SK-N-SH (cell line): ENCODE measurements at regions of chr2 and their contacts with region 1.

Region 1: GRCh38 chr2:172465417-172466334 is 38.3 kb downstream of the ITGA6 start:
- DNase-seq: peak; percentile 67
- H3K4me3 ChIP-seq: peak overlapping the region; percentile 36 to 41; a peak in 3 of 4 replicates
- H3K27ac ChIP-seq: peak overlapping the region in 1 of 2 experiments; percentile 42; a peak in 1 of 4 replicates
- H3K4me1 ChIP-seq: peaks cover 0 to 6% of the 10 kb centered on the region in 2 experiments; a peak in 3 of 4 replicates
- H3K27me3 ChIP-seq: no peaks in the 10 kb centered on the region
- CTCF ChIP-seq: peak; percentile 96
- EP300 ChIP-seq: no peak
- RAD21 ChIP-seq: peak; percentile 97

Region 2: GRCh38 chr2:171703574-171704347 is 761.9 kb before region 1 on chr2:
- CTCF ChIA-PET with region 1: interaction called, 10 read pairs
- POLR2A ChIA-PET with region 1: no interaction called
- DNase-seq: peak; percentile 40
- H3K4me3 ChIP-seq: no peak overlapping the region; a peak in 1 of 4 replicates
- H3K27ac ChIP-seq: peak overlapping the region in 1 of 2 experiments; percentile 23; a peak in 1 of 4 replicates
- H3K4me1 ChIP-seq: peaks cover 0 to 43% of the 10 kb centered on the region in 2 experiments; a peak in 3 of 4 replicates
- H3K27me3 ChIP-seq: no peaks in the 10 kb centered on the region
- CTCF ChIP-seq: peak; percentile 65
- EP300 ChIP-seq: no peak
- RAD21 ChIP-seq: peak; percentile 63

Region 3: DNA sequence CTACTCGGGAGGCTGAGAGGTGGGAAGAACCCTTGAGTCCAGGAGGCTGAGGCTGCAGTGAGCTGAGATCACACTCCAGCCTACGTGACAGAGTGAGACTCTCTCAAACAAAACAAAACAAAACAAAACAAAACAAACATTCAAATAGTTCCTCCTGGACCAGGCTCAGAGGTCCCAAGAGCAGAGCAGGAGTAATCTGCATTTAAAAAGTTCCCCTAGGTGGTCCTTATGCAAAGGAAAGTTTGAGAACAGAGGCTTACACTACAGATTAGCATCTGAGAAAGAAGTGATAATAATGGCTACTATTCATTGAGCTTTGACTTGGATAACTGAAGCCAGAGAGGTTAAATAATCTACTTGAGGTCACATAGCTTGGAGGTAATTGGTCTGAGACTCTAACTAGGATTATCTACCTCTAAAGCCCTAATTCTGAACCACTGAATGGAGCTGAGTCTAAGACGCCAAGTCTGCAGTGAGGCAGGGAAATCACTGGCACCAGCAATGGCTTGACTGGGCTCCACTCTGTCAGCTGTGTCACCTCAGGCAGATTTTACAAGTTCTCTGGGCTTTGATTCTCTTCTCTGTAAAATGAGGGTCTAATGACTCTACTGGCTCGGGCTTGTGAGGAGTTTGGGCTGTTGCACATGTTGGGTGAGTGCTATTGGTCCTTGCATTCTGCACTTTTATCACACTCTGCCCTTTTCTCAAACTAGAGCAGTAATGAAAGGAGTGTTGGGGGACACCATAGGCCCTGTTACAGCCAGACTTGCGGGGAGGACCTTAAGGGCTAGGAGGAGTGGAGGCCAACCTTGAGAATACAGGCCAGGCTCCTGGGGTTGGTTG is 333.7 kb before region 1 on chr2:
- CTCF ChIA-PET with region 1: interaction called, 14 read pairs
- POLR2A ChIA-PET with region 1: no interaction called
- DNase-seq: no peak
- H3K4me3 ChIP-seq: no peak overlapping the region
- H3K27ac ChIP-seq: no peak overlapping the region
- H3K4me1 ChIP-seq: no peaks in the 10 kb centered on the region
- H3K27me3 ChIP-seq: no peaks in the 10 kb centered on the region
- CTCF ChIP-seq: no peak
- EP300 ChIP-seq: no peak
- RAD21 ChIP-seq: no peak

Region 4: DNA sequence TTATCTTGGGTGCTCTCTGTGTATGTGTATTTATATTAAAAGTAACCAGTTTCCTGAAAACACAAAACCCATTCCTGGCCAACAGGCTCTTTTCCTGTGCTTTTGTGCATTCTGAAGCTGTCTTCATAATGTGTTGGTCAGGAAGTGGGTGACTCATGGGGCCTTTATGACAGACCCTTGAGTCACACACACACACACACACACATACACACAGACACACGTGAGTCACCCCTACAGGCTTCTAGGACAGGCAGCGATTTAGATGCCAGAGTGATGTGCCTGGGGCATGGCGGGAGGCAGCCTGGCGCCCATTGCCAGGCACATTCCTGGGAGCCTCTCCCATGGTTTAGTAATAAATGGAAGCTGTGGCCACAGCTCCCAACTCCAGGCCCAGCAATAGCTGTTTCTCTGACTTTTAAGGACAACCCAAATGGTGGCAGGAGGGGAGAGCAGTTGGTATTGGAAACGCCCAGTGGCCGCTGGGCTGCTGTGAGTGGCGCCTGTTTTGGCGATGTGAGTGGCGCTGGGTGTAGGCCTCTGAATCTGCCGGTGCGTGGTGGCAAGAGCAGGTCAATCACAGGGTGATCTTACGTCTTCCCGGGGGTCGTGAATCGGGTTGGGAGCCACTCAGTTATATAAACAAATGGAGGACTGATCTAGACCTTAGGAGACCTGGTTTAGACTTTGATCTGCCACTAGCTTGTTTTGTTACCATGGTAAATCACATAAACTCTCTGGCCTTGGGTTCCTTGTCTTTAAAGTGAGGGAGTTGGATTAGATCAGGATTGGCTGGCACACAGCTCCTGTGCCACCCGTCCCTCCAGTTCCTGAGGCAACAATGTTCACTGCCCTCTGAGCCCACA is 212.3 kb before region 1 on chr2:
- CTCF ChIA-PET with region 1: interaction called, 12 read pairs
- POLR2A ChIA-PET with region 1: no interaction called
- DNase-seq: peak; percentile 34
- H3K4me3 ChIP-seq: no peak overlapping the region
- H3K27ac ChIP-seq: peak overlapping the region; percentile 43 to 96
- H3K4me1 ChIP-seq: peaks cover 6 to 62% of the 10 kb centered on the region in 2 experiments; a peak in 3 of 4 replicates
- H3K27me3 ChIP-seq: no peaks in the 10 kb centered on the region
- CTCF ChIP-seq: no peak
- EP300 ChIP-seq: peak; percentile 30 to 99; a peak in 2 of 4 replicates
- RAD21 ChIP-seq: no peak

Region 5: DNA sequence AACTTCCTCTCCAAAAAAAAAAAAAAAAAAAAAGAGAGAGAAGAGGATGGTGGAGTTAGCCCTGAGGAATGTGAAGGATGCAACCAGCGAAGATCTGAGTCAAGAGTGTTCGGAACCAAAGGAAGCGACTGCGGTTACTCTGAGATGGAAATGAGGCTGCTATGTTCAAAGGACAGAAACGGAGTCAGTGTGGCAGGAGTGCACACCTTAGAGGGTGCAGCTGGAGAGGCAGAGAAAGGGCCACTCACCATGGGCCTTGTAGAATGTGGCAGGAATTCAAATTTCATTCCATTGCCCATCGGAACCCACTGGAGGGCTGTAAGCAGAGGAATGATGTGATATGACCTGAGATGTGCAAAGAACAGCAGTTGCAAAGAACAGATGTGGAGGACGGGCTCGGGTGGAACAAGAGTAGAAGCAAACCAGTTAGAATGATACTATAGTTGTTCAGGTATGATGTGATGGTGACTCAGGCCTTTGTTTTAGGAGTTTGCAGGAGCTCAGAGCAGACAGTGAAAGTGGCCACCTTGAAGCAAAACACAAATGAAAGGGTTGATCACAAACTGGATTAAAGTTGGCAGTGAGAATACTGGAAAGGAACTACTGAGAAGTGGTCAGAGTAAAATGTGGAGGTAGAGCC is 15.6 kb before region 1 on chr2:
- CTCF ChIA-PET with region 1: interaction called, 34 read pairs
- POLR2A ChIA-PET with region 1: no interaction called
- DNase-seq: no peak
- H3K4me3 ChIP-seq: no peak overlapping the region; a peak in 1 of 4 replicates
- H3K27ac ChIP-seq: no peak overlapping the region
- H3K4me1 ChIP-seq: peaks cover 3 to 19% of the 10 kb centered on the region in 2 experiments; a peak in 3 of 4 replicates
- H3K27me3 ChIP-seq: no peaks in the 10 kb centered on the region
- CTCF ChIP-seq: no peak
- EP300 ChIP-seq: no peak
- RAD21 ChIP-seq: no peak

Region 6: DNA sequence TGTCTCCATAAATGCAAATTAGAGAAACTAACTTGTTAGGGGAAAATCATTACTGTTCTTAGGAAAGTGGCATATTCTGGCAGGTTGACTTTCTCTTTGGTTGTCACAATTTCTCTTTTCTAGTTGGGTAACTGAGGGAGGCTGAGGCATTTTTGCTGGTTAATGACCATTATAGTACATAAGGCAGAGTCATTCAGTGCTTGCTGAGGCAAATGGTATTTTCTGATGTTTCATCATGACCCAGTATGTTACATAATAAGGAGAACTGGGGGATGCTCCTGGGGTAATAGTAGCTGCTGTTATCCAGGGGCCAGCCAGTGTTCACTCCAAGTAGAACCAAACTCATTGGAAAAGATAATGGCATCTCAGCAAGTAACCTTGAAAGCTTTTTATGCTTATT is 24.0 kb after region 1 on chr2:
- CTCF ChIA-PET with region 1: interaction called, 64 read pairs
- POLR2A ChIA-PET with region 1: no interaction called
- DNase-seq: no peak
- H3K4me3 ChIP-seq: no peak overlapping the region
- H3K27ac ChIP-seq: no peak overlapping the region
- H3K4me1 ChIP-seq: no peaks in the 10 kb centered on the region
- H3K27me3 ChIP-seq: no peaks in the 10 kb centered on the region
- CTCF ChIP-seq: no peak
- EP300 ChIP-seq: no peak
- RAD21 ChIP-seq: no peak

Region 7: GRCh38 chr2:173354601-173355131 is 889.0 kb after region 1 on chr2 and contains the start of gene CDCA7:
- CTCF ChIA-PET with region 1: no interaction called
- POLR2A ChIA-PET with region 1: no interaction called
- DNase-seq: peak; percentile 96
- H3K4me3 ChIP-seq: peak within 1 kb of the TSS; percentile 89 to 90
- H3K27ac ChIP-seq: peak within 1 kb of the TSS; percentile 38 to 94; a peak in 3 of 4 replicates
- H3K4me1 ChIP-seq: peaks cover 0 to 5% of the 10 kb centered on the region in 2 experiments; a peak in 1 of 4 replicates
- H3K27me3 ChIP-seq: no peaks in the 10 kb centered on the region; the same call in 1 of the 2 replicates
- CTCF ChIP-seq: no peak
- EP300 ChIP-seq: no peak
- RAD21 ChIP-seq: no peak
- polyA plus RNA-seq, gene CDCA7: 19.1 and 23.3 TPM in 2 replicates